Activated CD4-positive, alpha-beta memory T cell treated with anti-CD3 and anti-CD28 coated beads for 36 hours (primary cell): ENCODE measurements at regions of chr11 and their contacts with region 1.

Region 1: GRCh38 chr11:67288452-67289225 is 464 bp upstream of the ANKRD13D start:
- DNase-seq: peak; percentile 95
- H3K4me3 Mint-ChIP-seq: peak overlapping the region; percentile 66
- H3K27ac Mint-ChIP-seq: peak overlapping the region; percentile 97
- H3K4me1 Mint-ChIP-seq: peaks cover 62% of the 10 kb centered on the region
- H3K27me3 Mint-ChIP-seq: no peaks in the 10 kb centered on the region

Region 2: DNA sequence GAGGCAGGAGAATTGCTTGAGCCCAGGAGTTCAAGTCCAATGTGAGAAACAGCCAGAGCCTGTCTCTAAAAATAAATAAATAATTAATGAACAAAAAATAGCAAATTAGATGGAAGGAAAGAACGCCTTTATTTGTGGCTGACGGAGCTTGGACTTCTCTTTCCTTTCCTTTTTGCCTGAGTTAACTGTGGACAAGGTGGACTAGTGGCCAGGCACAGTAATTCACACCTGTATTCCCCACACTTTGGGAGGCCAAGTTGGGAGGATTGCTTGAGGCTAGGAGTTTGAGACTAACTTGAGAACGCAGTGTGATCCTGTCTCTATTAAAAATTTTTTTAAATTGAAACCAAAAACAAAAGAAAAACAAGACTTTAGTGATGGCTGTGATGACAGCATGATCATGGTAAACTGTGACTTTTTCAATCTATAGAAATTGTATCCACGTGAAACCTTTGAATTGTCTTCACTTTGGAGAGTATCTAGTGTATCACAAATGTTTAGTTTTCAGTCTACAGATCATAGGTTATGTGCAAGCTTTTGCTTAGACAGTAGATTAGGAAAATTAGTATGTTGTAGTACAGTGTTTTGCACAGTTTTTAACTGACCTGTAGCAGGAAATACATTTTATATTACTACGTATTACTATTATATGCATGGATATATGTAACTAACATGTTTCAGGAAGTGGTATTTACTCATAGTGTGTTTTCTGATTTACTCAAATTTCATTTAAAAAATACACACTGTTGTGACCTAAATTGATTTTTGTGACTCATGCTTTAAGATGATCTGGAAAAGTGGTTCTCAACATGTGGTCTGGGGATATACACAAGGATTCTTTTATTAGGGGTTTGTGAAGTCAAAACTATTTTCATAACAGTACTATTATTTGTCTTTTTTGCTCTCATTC is 127.5 kb before region 1 on chr11:
- CTCF ChIA-PET with region 1: no interaction called
- POLR2A ChIA-PET with region 1: no interaction called
- intact Hi-C with region 1: no loop called
- DNase-seq: no peak
- H3K4me3 Mint-ChIP-seq: no peak overlapping the region
- H3K27ac Mint-ChIP-seq: peak overlapping the region; percentile 57
- H3K4me1 Mint-ChIP-seq: peaks cover 47% of the 10 kb centered on the region
- H3K27me3 Mint-ChIP-seq: no peaks in the 10 kb centered on the region

Region 3: GRCh38 chr11:67277231-67277961 is 11.2 kb before region 1 on chr11:
- CTCF ChIA-PET with region 1: interaction called, 25 read pairs
- POLR2A ChIA-PET with region 1: interaction called, 72 read pairs
- intact Hi-C with region 1: loop called (anchors 1 kb)
- DNase-seq: peak; percentile 94
- H3K4me3 Mint-ChIP-seq: peak overlapping the region; percentile 69
- H3K27ac Mint-ChIP-seq: peak overlapping the region; percentile 97
- H3K4me1 Mint-ChIP-seq: peaks cover 70% of the 10 kb centered on the region
- H3K27me3 Mint-ChIP-seq: no peaks in the 10 kb centered on the region

Region 4: DNA sequence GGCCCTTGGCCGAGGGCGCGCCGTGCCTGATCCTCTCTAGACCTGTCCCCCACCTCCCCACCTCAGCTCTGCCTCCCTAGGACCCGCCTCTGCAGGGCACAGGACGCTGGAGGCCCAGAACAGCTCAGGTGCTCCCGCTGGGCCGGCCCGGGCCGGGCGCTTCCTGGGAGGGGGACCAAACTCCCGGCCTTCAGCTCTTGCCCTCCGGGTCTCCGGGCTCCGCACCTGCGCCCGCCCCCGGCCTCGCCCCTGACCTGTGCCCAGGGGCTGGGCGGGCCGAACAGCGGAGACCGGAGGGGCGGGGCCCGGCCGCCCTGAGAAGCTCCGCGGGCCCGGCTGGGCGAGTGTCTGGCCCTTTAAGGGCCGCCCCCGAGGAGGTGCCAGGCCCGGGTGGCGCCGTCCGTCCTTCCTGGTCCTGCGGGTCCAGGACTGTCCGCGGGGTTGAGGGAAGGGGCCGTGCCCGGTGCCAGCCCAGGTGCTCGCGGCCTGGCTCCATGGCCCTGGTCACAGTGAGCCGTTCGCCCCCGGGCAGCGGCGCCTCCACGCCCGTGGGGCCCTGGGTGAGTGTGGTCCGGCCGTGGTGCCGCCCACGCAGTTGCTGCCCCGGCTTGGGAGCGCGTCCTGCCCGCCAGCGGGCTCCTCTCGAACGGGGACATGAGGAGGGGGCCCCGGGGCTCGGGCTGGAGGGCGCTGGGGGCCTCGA is 14.6 kb after region 1 on chr11 and contains the start of gene SSH3:
- CTCF ChIA-PET with region 1: interaction called, 4 read pairs
- POLR2A ChIA-PET with region 1: interaction called, 13 read pairs
- intact Hi-C with region 1: no loop called
- DNase-seq: peak; percentile 62
- H3K4me3 Mint-ChIP-seq: peak within 1 kb of the TSS; percentile 70
- H3K27ac Mint-ChIP-seq: no peak within 1 kb of the TSS
- H3K4me1 Mint-ChIP-seq: peaks cover 13% of the 10 kb centered on the region
- H3K27me3 Mint-ChIP-seq: no peaks in the 10 kb centered on the region
- total RNA-seq, gene SSH3: 14.9 to 19.4 TPM